Transverse colon (tissue), 4 donors: ENCODE measurements at regions of chr7 and their contacts with region 1.

Region 1: DNA sequence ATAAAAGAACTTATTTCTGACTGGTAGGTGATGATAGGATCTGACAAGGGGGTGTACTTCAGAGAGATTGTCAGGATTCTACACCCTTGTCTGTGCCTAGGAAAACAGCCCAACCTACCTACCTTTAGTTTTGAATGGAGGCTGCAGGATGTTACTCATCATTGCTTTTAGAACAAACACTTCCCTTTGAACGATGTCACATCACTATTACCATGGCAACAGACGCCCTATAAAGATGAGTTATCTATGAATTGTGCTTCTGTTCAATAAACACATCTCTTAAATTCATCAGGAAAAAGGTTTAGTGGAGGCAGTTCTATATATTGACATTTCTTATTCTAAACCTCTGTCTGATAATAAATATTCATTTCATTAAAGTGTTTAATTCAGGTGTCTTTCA is 362.4 kb downstream of the CNTNAP2 start:
- DNase-seq: no peak
- H3K4me3 ChIP-seq: no peak overlapping the region
- H3K27ac ChIP-seq: no peak overlapping the region
- H3K4me1 ChIP-seq: no peaks in the 10 kb centered on the region
- H3K27me3 ChIP-seq: no peaks in the 10 kb centered on the region
- CTCF ChIP-seq: no peak
- EP300 ChIP-seq: no peak
- POLR2A ChIP-seq: no peak

Region 2: DNA sequence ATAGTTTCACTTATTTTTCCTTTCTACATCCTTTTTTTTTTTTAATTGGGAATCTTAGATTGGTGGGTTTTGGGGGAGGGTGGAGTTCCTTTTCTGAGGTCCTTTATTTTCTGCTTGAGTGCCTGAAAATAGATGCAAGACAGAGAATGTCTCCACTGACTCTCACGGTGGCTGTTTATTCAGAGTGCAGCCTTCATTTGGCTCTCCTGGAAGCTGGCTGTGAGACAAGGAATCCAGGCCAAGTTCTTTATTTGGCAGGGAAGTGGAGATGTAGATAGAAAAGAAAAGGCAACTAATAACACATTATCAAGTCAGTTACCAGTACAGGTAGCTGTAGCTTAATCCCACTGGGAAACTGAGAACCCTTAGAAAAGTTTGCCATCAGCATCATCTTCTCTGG is 243.8 kb before region 1 on chr7:
- in situ Hi-C with region 1: no loop called
- intact Hi-C with region 1: no loop called
- DNase-seq: no peak
- H3K4me3 ChIP-seq: no peak overlapping the region
- H3K27ac ChIP-seq: no peak overlapping the region
- H3K4me1 ChIP-seq: no peaks in the 10 kb centered on the region
- H3K27me3 ChIP-seq: no peaks in the 10 kb centered on the region
- CTCF ChIP-seq: no peak
- EP300 ChIP-seq: no peak
- POLR2A ChIP-seq: no peak

Region 3: GRCh38 chr7:146378201-146378600 is 100.8 kb before region 1 on chr7:
- in situ Hi-C with region 1: no loop called
- intact Hi-C with region 1: no loop called
- DNase-seq: no peak
- H3K4me3 ChIP-seq: no peak overlapping the region
- H3K27ac ChIP-seq: no peak overlapping the region
- H3K4me1 ChIP-seq: no peaks in the 10 kb centered on the region
- H3K27me3 ChIP-seq: no peaks in the 10 kb centered on the region
- CTCF ChIP-seq: no peak
- EP300 ChIP-seq: no peak
- POLR2A ChIP-seq: no peak

Region 4: DNA sequence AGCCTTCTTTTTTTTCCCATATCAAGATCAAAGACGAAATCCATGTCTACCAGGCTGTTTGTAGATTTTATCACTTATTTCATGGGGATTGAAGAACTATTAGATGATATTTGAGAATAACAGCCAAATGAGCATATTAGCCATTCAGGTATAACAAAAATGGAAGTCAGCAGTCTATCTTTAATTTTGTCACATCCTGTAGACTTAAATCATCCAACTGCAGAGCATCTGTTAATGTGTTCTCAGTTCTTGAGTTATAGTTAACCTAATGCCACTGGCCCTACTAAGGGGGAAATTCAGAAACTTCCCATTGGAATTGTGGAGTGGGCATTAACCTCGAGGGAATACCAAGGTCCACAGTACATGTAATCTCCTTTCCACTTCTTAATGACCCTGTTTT is 17.6 kb after region 1 on chr7:
- in situ Hi-C with region 1: no loop called
- intact Hi-C with region 1: loop called (anchors 1 kb)
- DNase-seq: no peak
- H3K4me3 ChIP-seq: no peak overlapping the region
- H3K27ac ChIP-seq: no peak overlapping the region
- H3K4me1 ChIP-seq: no peaks in the 10 kb centered on the region
- H3K27me3 ChIP-seq: no peaks in the 10 kb centered on the region
- CTCF ChIP-seq: no peak
- EP300 ChIP-seq: no peak
- POLR2A ChIP-seq: no peak